ENCODE measurements at regions of chr4 and their contacts with region 1.

Region 1: DNA sequence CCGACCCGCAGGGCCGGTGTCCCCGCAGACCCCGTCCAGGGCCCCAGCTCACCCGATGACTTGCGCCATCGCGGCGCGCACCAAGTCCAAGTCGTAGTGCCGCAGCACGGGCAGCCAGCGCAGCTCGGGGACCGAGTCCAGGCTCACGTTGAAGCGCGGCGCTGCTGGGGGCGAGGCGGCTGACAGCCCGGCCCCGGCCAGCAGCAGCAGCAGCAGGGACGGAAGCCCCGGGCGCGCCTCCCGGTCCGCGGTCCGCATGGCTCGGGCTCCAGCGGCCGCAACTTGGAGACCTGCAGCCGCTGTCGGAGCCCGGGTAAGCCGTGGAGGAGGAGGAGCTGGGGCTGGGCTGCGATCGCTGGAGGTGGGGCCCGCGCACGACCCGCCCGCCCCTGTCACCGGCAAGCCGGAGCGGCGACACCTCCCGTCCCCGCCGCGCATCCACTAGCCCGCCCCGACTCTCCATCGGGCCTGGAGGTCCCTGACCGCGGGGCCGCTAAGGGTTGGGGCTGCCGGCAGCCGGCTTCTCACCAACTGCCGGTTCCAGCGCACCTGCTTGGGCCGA is at the start of gene NAAA:
- DNase-seq: peak; percentile 74
- ATAC-seq: peak; percentile 75
- H3K4me3 Mint-ChIP-seq: peak within 1 kb of the TSS; percentile 98
- H3K27ac Mint-ChIP-seq: peak within 1 kb of the TSS; percentile 99
- H3K4me1 Mint-ChIP-seq: peaks cover 14% of the 10 kb centered on the region
- H3K27me3 Mint-ChIP-seq: no peaks in the 10 kb centered on the region
- CTCF ChIP-seq: no peak
- total RNA-seq, gene NAAA: 27.7 and 31.1 TPM in 2 replicates

Region 2: GRCh38 chr4:75724066-75724866 is 216.5 kb before region 1 on chr4 and contains the start of gene USO1:
- CTCF ChIA-PET with region 1: no interaction called
- POLR2A ChIA-PET with region 1: interaction called, 11 read pairs
- intact Hi-C with region 1: loop called (anchors 1 kb)
- DNase-seq: peak; percentile 99
- ATAC-seq: peak; percentile 95
- H3K4me3 Mint-ChIP-seq: peak within 1 kb of the TSS; percentile 100
- H3K27ac Mint-ChIP-seq: peak within 1 kb of the TSS; percentile 99
- H3K4me1 Mint-ChIP-seq: peaks cover 52% of the 10 kb centered on the region
- H3K27me3 Mint-ChIP-seq: no peaks in the 10 kb centered on the region
- CTCF ChIP-seq: peak; percentile 23
- total RNA-seq, gene USO1: 41.3 and 41.7 TPM in 2 replicates

Region 3: GRCh38 chr4:75881476-75881875 is 59.3 kb before region 1 on chr4:
- CTCF ChIA-PET with region 1: no interaction called
- POLR2A ChIA-PET with region 1: no interaction called
- intact Hi-C with region 1: no loop called
- DNase-seq: no peak
- ATAC-seq: no peak
- H3K4me3 Mint-ChIP-seq: no peak overlapping the region
- H3K27ac Mint-ChIP-seq: no peak overlapping the region
- H3K4me1 Mint-ChIP-seq: no peaks in the 10 kb centered on the region
- H3K27me3 Mint-ChIP-seq: peaks cover 10% of the 10 kb centered on the region
- CTCF ChIP-seq: no peak

Region 4: DNA sequence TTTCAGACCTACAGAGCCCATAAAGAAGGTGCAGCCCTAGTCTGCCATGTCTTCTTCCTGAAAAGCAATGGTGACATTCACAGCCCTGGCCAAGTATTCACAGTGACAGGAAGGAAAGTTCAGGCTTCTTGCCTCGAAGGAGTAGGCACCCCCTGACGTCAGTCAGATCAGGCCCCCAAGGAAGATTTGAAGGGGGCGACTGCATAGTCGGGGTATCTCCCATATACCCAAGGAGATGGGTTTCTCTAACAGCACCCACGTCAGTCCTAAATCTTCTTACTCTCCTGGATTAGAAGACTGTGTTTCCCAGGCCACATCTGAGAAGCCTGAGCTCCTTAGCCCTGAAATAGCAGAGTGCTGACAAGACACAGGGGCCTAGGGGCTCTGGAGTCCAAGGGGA is 38.4 kb before region 1 on chr4 and contains the start of gene PPEF2:
- CTCF ChIA-PET with region 1: no interaction called
- POLR2A ChIA-PET with region 1: interaction called, 14 read pairs
- intact Hi-C with region 1: loop called (anchors 1 kb)
- DNase-seq: no peak
- ATAC-seq: no peak
- H3K4me3 Mint-ChIP-seq: peak within 1 kb of the TSS; percentile 55
- H3K27ac Mint-ChIP-seq: peak within 1 kb of the TSS; percentile 65
- H3K4me1 Mint-ChIP-seq: peaks cover 14% of the 10 kb centered on the region
- H3K27me3 Mint-ChIP-seq: no peaks in the 10 kb centered on the region
- CTCF ChIP-seq: no peak
- total RNA-seq, gene PPEF2: 0.17 and 0.35 TPM in 2 replicates

Region 5: DNA sequence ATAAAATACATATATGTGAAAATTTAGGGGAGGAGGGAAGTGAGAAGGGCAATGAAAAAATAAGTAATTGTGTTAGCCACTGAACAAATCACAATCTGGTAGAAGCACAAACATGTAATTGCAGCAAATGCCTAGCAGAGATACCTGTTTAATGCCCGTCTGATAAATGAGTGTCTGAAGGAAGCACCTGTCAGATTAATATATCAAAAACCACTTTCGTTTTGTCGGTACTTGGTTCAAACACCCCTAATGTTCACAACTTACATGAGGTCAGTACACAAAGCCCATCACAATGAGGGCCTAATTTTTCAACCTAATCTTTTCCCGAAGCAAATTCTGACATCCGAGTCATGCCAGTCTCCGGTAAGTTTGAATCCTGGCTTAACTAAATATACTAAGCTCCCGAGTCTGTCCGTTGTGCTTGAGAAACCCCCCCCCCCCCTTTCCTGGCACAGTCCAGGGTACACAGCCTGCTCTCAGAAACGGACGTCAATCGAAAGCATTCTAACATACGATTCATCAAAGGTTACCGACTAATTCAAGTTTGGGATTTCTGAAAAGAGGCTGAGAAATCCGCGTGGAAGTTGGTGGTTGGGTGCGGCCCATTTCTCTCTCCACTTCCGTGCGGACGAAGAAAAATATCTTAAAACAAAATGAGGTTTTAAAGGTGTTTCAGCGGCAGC is 49.2 kb after region 1 on chr4:
- CTCF ChIA-PET with region 1: interaction called, 4 read pairs
- POLR2A ChIA-PET with region 1: interaction called, 7 read pairs
- intact Hi-C with region 1: loop called (anchors 1 kb)
- DNase-seq: no peak
- ATAC-seq: no peak
- H3K4me3 Mint-ChIP-seq: peak overlapping the region; percentile 95
- H3K27ac Mint-ChIP-seq: peak overlapping the region; percentile 86
- H3K4me1 Mint-ChIP-seq: peaks cover 34% of the 10 kb centered on the region
- H3K27me3 Mint-ChIP-seq: peaks cover 2% of the 10 kb centered on the region
- CTCF ChIP-seq: no peak

Region 6: DNA sequence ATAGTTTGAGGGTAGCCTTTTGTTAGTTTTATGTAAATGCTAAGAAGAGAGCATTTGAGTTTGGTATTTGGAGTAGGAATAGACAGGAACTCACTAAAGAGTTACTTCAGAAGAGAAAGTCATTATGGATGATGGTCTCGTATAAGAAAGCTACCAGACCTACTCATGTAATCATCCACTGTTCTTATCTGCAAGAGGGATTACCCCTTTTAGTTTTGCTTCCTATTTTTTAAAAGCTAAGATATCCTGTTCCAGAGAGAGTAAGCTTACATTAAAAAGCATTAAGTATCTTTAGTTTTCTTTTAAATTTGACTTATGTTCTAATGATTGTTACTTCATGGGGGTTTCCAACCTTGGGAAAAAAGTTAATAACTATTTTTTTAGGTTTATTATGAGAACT is 121.2 kb after region 1 on chr4:
- CTCF ChIA-PET with region 1: no interaction called
- POLR2A ChIA-PET with region 1: interaction called, 11 read pairs
- intact Hi-C with region 1: loop called (anchors 2 kb)
- DNase-seq: no peak
- ATAC-seq: peak; percentile 96
- H3K4me3 Mint-ChIP-seq: peak overlapping the region; percentile 49
- H3K27ac Mint-ChIP-seq: peak overlapping the region; percentile 75
- H3K4me1 Mint-ChIP-seq: peaks cover 42% of the 10 kb centered on the region
- H3K27me3 Mint-ChIP-seq: no peaks in the 10 kb centered on the region
- CTCF ChIP-seq: no peak

Measured in activated B cell treated with CpG ODN at 0.5 μM for 24 hours (primary cell).